Body of pancreas (tissue), 4 donors: ENCODE measurements at regions of chr12 and their contacts with region 1.

Region 1: DNA sequence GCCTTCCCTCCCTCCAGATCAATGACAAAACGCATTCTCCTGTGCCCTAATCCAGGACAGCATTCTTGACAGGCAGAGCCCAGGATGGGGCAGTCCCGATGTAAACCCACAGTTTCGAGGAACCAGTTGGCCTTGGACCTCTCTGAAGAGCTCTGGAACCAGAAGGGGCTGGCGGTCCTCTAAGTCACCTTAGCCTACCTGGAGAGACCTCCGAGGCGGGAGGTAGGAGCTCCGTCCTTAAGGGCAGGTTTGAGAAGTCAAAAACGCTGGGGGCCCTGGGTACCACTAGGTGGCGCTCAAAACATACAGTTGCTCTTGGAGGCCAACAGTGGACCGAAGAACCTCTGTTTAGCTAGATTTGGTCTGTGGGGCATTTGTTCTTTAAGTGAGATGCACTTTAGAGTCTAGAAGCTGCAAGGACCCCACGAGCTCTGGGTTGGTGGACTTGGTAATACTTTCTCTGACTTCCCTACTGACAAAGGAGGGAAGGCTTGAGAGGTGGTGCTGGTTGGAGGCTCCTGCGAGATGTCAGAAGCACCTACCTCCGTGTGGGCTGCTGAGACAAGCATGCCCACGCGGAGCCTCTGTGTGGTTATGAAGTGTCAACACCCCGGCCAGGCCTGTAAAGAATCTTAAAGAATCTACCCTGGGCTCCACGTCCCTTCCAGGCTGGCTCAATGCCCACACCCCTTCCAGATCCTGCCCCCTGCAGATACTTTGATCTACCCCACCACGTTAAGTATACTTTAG is 74.8 kb upstream of the CHST11 start:
- DNase-seq: peak; percentile 84 to 88 (median 86)
- ATAC-seq: peak; percentile 91
- H3K4me3 ChIP-seq: no peak overlapping the region
- H3K27ac ChIP-seq: no peak overlapping the region
- H3K4me1 ChIP-seq: peaks cover 8% of the 10 kb centered on the region
- H3K27me3 ChIP-seq: peaks cover 0 to 3% of the 10 kb centered on the region in 2 donors
- CTCF ChIP-seq: peak; percentile 90 to 94 (median 92)
- POLR2A ChIP-seq: no peak

Region 2: DNA sequence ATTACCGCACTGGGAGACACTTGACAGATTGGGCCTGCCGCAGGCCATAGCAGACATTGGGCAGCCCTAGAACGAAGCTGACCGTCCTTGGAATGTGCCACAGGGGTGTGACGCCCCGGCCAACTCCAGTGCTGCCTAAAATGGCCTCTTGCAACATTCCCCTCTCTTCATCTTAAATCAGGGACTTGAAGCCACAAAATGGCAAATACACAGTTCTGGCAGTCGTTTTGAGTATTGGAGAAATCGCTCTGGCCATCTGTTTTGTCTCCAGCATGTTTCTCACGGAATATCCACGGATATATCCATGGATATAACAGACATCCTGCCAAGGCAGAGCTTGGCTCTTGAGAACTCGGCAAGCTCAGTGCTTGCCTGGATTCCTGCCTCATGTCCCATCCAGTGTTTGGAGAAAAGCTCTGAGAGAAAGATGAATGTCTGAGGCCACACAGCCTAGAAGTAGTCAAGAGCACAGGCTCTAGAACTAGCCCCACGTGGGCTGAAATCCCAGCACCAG is 233.2 kb after region 1 on chr12:
- intact Hi-C with region 1: no loop called
- DNase-seq: peak in 3 of 4 donors; percentile 27 to 50 (median 27)
- ATAC-seq: peak; percentile 65
- H3K4me3 ChIP-seq: no peak overlapping the region
- H3K27ac ChIP-seq: no peak overlapping the region
- H3K4me1 ChIP-seq: no peaks in the 10 kb centered on the region
- H3K27me3 ChIP-seq: no peaks in the 10 kb centered on the region
- CTCF ChIP-seq: no peak
- POLR2A ChIP-seq: no peak

Region 3: GRCh38 chr12:104877123-104877705 is 495.3 kb after region 1 on chr12:
- intact Hi-C with region 1: loop called (anchors 5 kb)
- DNase-seq: peak; percentile 22 to 59 (median 39)
- ATAC-seq: peak; percentile 60
- H3K4me3 ChIP-seq: no peak overlapping the region
- H3K27ac ChIP-seq: no peak overlapping the region
- H3K4me1 ChIP-seq: no peaks in the 10 kb centered on the region
- H3K27me3 ChIP-seq: no peaks in the 10 kb centered on the region
- CTCF ChIP-seq: peak in 6 of 7 experiments; percentile 33 to 81 (median 58)
- POLR2A ChIP-seq: no peak

Region 4: DNA sequence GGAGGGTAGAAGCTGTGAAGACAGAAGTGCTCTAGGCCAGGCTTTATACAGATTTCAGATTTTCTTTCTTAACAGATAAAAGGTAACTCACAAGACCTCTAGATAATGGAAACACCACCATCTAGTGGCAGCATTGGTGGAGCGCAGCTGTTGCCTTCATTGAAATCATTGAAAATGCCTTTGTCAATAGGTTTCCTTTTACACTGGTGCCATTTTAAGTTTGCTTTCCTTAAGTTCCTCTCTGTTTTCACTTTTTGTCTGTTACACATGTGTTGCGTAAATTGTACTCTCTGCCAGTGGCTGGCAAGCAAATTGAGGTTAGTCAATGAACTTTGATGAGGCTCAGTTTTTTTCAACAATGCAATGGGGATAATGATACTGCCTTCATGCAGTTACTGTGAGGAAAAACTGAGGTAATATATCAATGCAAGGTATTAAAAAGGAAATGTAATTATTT is 671.2 kb after region 1 on chr12:
- intact Hi-C with region 1: loop called (anchors 5 kb)
- DNase-seq: peak; percentile 73 to 85 (median 81)
- ATAC-seq: peak; percentile 85
- H3K4me3 ChIP-seq: no peak overlapping the region
- H3K27ac ChIP-seq: no peak overlapping the region
- H3K4me1 ChIP-seq: no peaks in the 10 kb centered on the region
- H3K27me3 ChIP-seq: no peaks in the 10 kb centered on the region
- CTCF ChIP-seq: peak; percentile 76 to 95 (median 84)
- POLR2A ChIP-seq: no peak